Mammary epithelial cell (primary cell): ENCODE measurements at regions of chr19 and their contacts with region 1.

Region 1: DNA sequence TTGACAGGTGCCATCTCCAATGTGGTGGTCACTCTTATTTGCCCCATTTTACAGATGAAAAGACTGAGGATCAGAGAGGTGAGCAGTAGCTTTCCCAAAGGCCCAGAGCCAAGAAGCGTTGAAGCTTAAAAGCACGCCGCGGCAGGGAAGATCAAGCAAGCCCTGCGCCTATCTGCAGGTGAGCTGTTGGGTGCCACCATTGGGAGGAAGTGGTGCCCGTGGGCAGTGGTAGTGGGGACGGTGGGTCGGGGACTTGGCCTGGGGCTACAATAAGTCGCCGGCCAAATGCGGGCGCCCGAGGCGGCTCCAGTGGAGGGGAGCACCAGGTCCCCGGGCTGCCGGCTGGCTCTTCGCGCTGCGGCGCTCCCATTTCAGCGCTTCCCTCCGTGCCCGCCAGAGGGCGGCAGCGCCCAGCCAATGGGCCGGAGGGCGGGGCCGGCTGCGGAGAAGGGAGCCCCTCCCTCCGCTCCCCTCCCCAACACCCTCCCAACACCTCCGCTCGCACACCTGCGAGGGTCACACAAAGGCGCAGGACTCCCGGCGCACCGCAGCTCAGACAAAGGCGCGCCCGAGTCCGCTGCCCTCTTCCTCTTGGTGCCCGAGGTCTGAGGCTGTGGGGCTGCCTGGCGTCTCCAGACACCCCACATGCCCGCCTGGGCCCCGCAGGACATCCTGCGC is 744 bp upstream of the POU2F2 start:
- DNase-seq: peak; percentile 41
- H3K4me3 ChIP-seq: peak overlapping the region in 1 of 3 experiments; percentile 38
- H3K27ac ChIP-seq: no peak overlapping the region
- H3K4me1 ChIP-seq: peaks cover 33% of the 10 kb centered on the region
- H3K27me3 ChIP-seq: no peaks in the 10 kb centered on the region
- CTCF ChIP-seq: peak; percentile 55 to 94

Region 2: DNA sequence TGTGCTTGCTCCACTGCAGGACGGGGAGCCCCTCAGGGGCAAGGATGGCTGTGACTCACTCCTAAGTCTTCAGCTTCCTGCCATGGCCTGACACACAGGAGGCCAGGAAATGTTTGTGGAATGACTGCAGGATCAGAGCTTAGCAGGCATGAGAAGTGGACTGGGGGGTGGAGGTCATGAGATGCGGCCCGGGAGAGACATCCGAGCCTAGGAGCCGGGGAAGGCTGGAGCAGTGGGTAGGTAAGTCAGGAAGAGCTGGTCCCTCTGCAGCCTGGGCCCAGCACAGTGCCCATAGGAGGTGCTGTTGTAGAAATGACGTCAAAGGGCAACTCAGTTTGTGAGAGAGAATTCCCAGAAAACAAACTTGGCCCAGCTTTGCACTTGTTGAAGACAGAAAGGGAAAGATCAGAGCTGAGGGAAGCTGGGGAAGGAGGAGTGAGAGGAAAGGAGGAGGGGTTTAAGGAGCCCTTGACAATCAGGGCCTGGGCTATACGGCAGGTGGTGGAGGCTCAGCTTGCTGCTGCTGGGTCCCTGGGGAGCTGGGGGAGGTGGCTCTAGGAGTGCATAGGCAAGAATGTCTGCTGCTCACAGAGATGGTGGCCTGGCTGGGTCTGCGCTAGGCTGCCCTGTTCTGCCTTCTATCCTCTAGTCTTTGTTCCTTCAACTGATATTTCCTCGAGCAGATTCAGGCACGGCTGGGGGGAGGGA is 19.2 kb before region 1 on chr19:
- CTCF ChIA-PET with region 1: interaction called, 18 read pairs
- dilution Hi-C with region 1: no loop called
- in situ Hi-C with region 1: no loop called
- intact Hi-C with region 1: loop called (anchors 1 kb)
- DNase-seq: peak; percentile 96
- H3K4me3 ChIP-seq: peak overlapping the region in 1 of 3 experiments; percentile 21
- H3K27ac ChIP-seq: peak overlapping the region; percentile 87
- H3K4me1 ChIP-seq: peaks cover 48% of the 10 kb centered on the region
- H3K27me3 ChIP-seq: no peaks in the 10 kb centered on the region
- CTCF ChIP-seq: peak; percentile 39 to 41

Region 3: GRCh38 chr19:42184401-42184861 is 51.4 kb after region 1 on chr19:
- CTCF ChIA-PET with region 1: no interaction called
- dilution Hi-C with region 1: no loop called
- in situ Hi-C with region 1: no loop called
- intact Hi-C with region 1: loop called (anchors 1 kb)
- DNase-seq: peak; percentile 62
- H3K4me3 ChIP-seq: no peak overlapping the region
- H3K27ac ChIP-seq: no peak overlapping the region
- H3K4me1 ChIP-seq: peaks cover 11% of the 10 kb centered on the region
- H3K27me3 ChIP-seq: no peaks in the 10 kb centered on the region
- CTCF ChIP-seq: peak; percentile 93 to 95

Region 4: DNA sequence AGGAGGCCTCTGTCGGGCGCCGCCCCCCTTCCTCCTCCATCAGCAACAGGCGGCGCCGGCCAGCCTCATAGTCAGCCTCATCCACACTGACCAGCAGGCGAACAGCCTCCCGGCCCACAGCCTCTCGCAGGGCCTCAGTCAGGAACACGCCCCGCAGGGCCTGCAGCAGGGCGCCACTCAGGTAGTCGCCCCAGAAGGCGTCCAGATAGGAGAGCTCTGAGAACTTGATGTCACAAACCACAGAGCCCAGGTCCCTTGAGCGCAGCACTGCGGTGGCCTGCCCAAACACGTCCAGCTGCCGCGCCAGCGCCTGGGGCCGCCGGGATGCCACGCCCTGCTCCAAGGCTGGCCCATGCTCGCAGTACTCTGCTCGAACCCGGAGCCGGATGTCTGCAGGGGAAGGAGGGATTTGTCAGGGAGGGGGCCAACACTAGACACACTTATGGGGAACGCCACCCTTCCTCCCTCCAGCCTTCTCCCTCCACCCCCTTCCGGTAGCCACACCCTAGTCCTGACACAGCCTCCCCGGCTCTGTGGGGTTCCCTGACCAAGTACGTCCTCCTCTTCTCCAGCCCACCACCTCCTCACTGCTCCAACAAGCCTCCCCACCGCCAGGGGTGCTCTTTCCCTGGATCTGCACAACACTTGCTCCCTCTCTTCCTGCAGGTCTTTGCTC is 66.6 kb after region 1 on chr19:
- CTCF ChIA-PET with region 1: no interaction called
- dilution Hi-C with region 1: no loop called
- in situ Hi-C with region 1: no loop called
- intact Hi-C with region 1: no loop called
- DNase-seq: peak; percentile 80
- H3K4me3 ChIP-seq: no peak overlapping the region
- H3K27ac ChIP-seq: peak overlapping the region; percentile 28
- H3K4me1 ChIP-seq: peaks cover 29% of the 10 kb centered on the region
- H3K27me3 ChIP-seq: no peaks in the 10 kb centered on the region
- CTCF ChIP-seq: peak; percentile 49 to 67

Region 5: DNA sequence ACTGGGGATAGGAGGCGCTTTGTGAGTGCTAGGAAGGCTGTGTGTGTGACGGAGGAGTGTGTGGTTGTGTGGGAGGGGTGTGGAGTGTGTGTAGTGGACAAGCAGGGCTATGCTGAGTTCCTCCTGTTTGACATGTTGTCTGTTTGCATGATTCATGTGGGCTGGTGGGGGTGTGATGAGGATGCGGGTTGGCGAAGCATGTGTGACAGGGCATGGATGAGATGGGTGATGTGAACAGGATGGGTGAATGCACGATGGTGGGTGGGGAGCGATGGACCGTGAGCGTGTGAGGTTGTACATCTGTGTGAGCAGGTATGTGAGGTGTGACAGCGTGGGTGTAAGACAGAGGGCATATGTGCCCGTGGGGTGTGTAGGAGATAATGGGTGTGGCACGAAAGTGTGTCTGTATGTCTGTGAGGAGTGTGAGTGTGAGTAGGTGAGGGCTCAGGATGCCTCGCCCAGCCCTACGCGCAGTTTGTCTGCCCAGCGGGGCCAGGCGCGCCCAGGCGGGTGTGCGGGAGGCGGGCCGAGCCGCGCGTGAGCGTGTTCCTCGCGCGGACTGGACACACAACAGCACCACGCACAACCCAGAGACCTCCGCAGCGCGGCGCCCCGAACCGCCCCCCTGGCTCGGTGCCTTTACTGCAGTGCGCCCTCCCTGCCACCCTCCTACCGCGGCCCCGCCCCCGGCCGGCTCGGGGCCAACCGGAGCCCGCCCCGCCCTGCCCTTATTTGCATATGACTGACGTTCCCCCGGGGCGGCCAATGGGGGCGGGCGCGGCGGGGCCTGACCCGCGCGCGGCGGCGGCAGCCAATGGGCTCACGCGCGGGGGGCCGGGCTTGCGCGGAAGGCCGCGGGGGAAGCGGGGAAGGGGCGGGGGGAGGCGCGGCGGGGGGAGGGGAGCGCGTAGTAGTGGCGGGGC is 150.4 kb after region 1 on chr19:
- CTCF ChIA-PET with region 1: no interaction called
- dilution Hi-C with region 1: no loop called
- in situ Hi-C with region 1: no loop called
- intact Hi-C with region 1: loop called (anchors 2 kb)
- DNase-seq: peak; percentile 91
- H3K4me3 ChIP-seq: peak overlapping the region in 2 of 3 experiments; percentile 44 to 48
- H3K27ac ChIP-seq: peak overlapping the region; percentile 43
- H3K4me1 ChIP-seq: peaks cover 56% of the 10 kb centered on the region
- H3K27me3 ChIP-seq: no peaks in the 10 kb centered on the region
- CTCF ChIP-seq: no peak

Region 6: GRCh38 chr19:42295831-42296525 is 163.0 kb after region 1 on chr19:
- CTCF ChIA-PET with region 1: no interaction called
- dilution Hi-C with region 1: no loop called
- in situ Hi-C with region 1: no loop called
- intact Hi-C with region 1: loop called (anchors 5 kb)
- DNase-seq: peak; percentile 48
- H3K4me3 ChIP-seq: no peak overlapping the region
- H3K27ac ChIP-seq: no peak overlapping the region
- H3K4me1 ChIP-seq: no peaks in the 10 kb centered on the region
- H3K27me3 ChIP-seq: no peaks in the 10 kb centered on the region
- CTCF ChIP-seq: peak; percentile 88 to 95

Region 7: GRCh38 chr19:42401365-42402303 is 268.6 kb after region 1 on chr19:
- CTCF ChIA-PET with region 1: no interaction called
- dilution Hi-C with region 1: no loop called
- in situ Hi-C with region 1: no loop called
- intact Hi-C with region 1: loop called (anchors 1 kb)
- DNase-seq: peak; percentile 31
- H3K4me3 ChIP-seq: peak overlapping the region; percentile 36 to 52 (median 37)
- H3K27ac ChIP-seq: no peak overlapping the region
- H3K4me1 ChIP-seq: peaks cover 7% of the 10 kb centered on the region
- H3K27me3 ChIP-seq: no peaks in the 10 kb centered on the region
- CTCF ChIP-seq: peak; percentile 72 to 79

Region 8: DNA sequence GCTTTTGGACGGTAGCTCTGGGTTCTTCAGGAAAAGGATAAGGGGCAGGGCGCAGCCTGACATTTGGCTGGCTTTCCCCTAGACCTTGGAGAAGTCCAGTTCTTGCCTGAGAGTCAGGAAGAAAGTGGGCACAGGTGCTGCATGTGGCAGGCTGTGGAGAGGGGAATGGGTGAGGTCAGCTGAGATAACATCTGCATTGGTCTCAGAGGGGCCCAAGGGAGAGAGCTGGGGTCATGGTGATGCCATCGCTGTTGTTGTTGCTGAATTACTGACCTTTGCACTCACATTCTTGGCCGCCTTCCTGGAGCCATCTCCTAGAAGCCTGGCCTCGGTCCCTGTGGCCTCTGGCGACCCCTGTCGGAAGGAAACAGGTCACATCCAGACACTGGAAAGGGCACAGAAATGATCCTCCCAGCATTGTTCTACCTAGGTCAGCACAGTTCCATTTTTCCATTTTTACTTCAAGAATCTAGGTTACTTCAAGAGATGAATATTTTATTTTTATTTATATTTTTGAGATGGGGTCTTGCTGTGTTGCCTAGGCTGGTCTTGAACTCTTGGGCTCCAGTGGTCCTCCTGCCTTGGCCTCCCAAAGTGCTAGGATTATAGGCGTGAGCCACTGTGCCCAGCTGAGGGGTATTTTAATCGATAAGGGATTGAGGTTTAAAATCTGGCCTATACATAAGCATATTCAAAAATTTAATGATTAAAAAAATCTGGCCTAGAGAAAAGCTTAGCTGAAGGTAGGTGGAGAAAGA is 300.7 kb after region 1 on chr19:
- CTCF ChIA-PET with region 1: no interaction called
- dilution Hi-C with region 1: no loop called
- in situ Hi-C with region 1: no loop called
- intact Hi-C with region 1: loop called (anchors 2 kb)
- DNase-seq: peak; percentile 39
- H3K4me3 ChIP-seq: no peak overlapping the region
- H3K27ac ChIP-seq: no peak overlapping the region
- H3K4me1 ChIP-seq: no peaks in the 10 kb centered on the region
- H3K27me3 ChIP-seq: no peaks in the 10 kb centered on the region
- CTCF ChIP-seq: peak; percentile 78 to 91